H1 (cell line): ENCODE measurements at regions of chr15 and their contacts with region 1.

Region 1: DNA sequence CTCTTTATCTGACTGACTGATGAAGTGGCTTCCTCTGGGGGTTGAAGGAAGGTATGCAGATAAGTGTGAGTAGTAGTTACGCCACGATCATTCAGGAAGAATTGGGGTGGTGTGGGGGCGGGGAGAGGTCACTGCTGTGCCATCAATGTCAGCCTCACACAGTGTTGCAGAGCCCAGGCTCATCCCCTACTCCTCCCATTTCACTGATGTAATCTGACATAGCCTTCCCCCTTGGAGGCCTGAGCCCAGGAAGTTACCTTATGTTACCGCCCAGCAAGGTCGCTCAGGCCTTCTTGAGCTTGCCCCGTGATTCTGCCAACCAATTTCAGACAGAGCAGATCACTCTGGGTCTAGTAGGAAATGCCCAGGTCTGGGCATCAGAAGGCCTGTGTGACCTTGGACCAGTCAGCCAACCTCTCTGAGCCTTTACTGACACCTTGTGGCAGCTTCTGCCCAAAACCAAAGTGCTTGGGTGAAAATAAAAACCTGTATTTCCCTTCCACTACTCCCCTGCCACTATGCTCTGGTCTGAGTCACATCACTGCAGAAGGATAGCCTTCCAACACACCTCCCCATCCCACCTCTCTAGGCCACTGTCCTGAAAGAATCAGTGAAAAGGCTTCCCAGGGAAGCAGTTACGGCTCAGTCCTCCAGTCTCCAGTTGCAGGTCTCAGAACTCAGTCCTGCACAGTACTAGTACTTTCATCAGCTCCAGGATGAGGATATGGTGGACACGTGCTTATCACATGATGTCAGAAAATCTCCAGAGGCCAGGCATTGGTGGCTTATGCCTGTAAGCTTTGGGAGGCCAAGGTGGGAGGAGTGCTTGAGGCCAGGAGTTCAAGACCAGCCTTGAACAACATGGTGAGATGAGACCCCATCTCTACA is 28.1 kb upstream of the INSYN1 start:
- DNase-seq: peak in 1 of 2 experiments; percentile 66
- H3K4me3 ChIP-seq: no peak overlapping the region
- H3K27ac ChIP-seq: no peak overlapping the region
- H3K4me1 ChIP-seq: peaks cover 7 to 25% (median 14%) of the 10 kb centered on the region in 4 experiments
- H3K27me3 ChIP-seq: no peaks in the 10 kb centered on the region
- CTCF ChIP-seq: peak; percentile 37 to 73 (median 70)
- EP300 ChIP-seq: no peak
- POLR2A ChIP-seq: no peak
- RAD21 ChIP-seq: peak; percentile 77 to 79

Region 2: GRCh38 chr15:73704869-73705645 is 76.2 kb before region 1 on chr15:
- CTCF ChIA-PET with region 1: interaction called, 21 read pairs
- POLR2A ChIA-PET with region 1: no interaction called
- DNase-seq: peak; percentile 34 to 87
- H3K4me3 ChIP-seq: no peak overlapping the region
- H3K27ac ChIP-seq: no peak overlapping the region; the same call in 1 of the 2 replicates
- H3K4me1 ChIP-seq: no peaks in the 10 kb centered on the region
- H3K27me3 ChIP-seq: no peaks in the 10 kb centered on the region
- CTCF ChIP-seq: peak; percentile 90 to 95 (median 95)
- EP300 ChIP-seq: no peak
- POLR2A ChIP-seq: no peak
- RAD21 ChIP-seq: peak; percentile 78 to 83

Region 3: GRCh38 chr15:73712088-73712487 is 69.2 kb before region 1 on chr15:
- CTCF ChIA-PET with region 1: interaction called, 30 read pairs
- POLR2A ChIA-PET with region 1: interaction called, 3 read pairs
- DNase-seq: no peak
- H3K4me3 ChIP-seq: no peak overlapping the region
- H3K27ac ChIP-seq: no peak overlapping the region
- H3K4me1 ChIP-seq: no peaks in the 10 kb centered on the region
- H3K27me3 ChIP-seq: no peaks in the 10 kb centered on the region
- CTCF ChIP-seq: peak; percentile 61 to 76 (median 70)
- EP300 ChIP-seq: no peak
- POLR2A ChIP-seq: no peak
- RAD21 ChIP-seq: peak; percentile 65 to 77

Region 4: GRCh38 chr15:73717802-73718201 is 63.5 kb before region 1 on chr15:
- CTCF ChIA-PET with region 1: interaction called, 30 read pairs
- POLR2A ChIA-PET with region 1: interaction called, 3 read pairs
- DNase-seq: no peak
- H3K4me3 ChIP-seq: no peak overlapping the region
- H3K27ac ChIP-seq: no peak overlapping the region
- H3K4me1 ChIP-seq: peaks cover 0 to 4% (median 0%) of the 10 kb centered on the region in 4 experiments; a peak in 1 of 7 replicates
- H3K27me3 ChIP-seq: no peaks in the 10 kb centered on the region
- CTCF ChIP-seq: peak; percentile 50 to 57 (median 53)
- EP300 ChIP-seq: no peak
- POLR2A ChIP-seq: no peak
- RAD21 ChIP-seq: peak; percentile 28 to 56; a peak in 3 of 4 replicates

Region 5: DNA sequence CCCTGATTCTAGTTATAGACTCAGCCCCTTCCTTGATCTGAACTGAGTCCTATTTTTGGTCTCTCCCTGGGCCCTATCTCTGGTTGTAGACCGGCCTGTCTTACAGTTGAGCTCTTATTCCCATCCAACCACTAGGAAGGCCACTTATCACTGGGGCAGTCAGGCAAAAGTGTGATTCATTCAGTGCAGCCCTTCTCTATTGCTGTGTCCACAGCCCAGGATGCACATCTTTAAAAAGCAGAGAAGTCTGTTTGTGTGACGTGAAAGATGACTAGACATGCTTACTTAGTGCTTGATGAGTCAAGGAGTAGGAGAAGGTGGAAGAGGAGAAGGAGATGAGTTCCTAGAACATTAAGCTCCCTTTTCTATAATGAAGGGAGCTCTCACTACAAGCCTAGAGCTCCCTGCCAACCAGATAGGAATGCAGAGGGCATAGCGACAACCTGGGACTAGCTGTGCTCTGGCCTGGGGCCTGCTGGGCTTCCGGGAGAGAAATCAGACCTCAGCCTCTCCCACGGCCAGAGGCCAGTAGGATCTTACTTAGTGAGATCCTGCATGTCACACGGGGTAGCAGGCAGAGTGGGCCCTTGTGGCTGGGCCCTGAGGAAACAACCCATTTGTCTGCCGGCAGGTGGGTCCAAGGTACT is 53.8 kb before region 1 on chr15:
- CTCF ChIA-PET with region 1: interaction called, 10 read pairs
- POLR2A ChIA-PET with region 1: no interaction called
- DNase-seq: no peak
- H3K4me3 ChIP-seq: no peak overlapping the region
- H3K27ac ChIP-seq: no peak overlapping the region
- H3K4me1 ChIP-seq: no peaks in the 10 kb centered on the region; a peak in 1 of 7 replicates
- H3K27me3 ChIP-seq: no peaks in the 10 kb centered on the region
- CTCF ChIP-seq: no peak
- EP300 ChIP-seq: no peak
- POLR2A ChIP-seq: no peak
- RAD21 ChIP-seq: no peak

Region 6: GRCh38 chr15:73753250-73754130 is 27.8 kb before region 1 on chr15 and contains the start of gene INSYN1:
- CTCF ChIA-PET with region 1: interaction called, 45 read pairs
- POLR2A ChIA-PET with region 1: interaction called, 6 read pairs
- DNase-seq: peak; percentile 21 to 67
- H3K4me3 ChIP-seq: peak within 1 kb of the TSS; percentile 43 to 87 (median 60)
- H3K27ac ChIP-seq: no peak within 1 kb of the TSS
- H3K4me1 ChIP-seq: peaks cover 11 to 23% (median 17%) of the 10 kb centered on the region in 4 experiments
- H3K27me3 ChIP-seq: peaks cover 0 to 24% (median 13%) of the 10 kb centered on the region in 4 experiments; a peak in 6 of 7 replicates
- CTCF ChIP-seq: no peak
- EP300 ChIP-seq: no peak
- POLR2A ChIP-seq: no peak
- RAD21 ChIP-seq: no peak; a peak in 1 of 4 replicates
- total RNA-seq, gene INSYN1: 10.2 and 13.1 TPM in 2 replicates

Region 7: GRCh38 chr15:73792415-73792814 is 11.1 kb after region 1 on chr15:
- CTCF ChIA-PET with region 1: interaction called, 13 read pairs
- POLR2A ChIA-PET with region 1: no interaction called
- DNase-seq: no peak
- H3K4me3 ChIP-seq: no peak overlapping the region
- H3K27ac ChIP-seq: no peak overlapping the region
- H3K4me1 ChIP-seq: peaks cover 6 to 10% (median 7%) of the 10 kb centered on the region in 4 experiments
- H3K27me3 ChIP-seq: peaks cover 0 to 2% (median 0%) of the 10 kb centered on the region in 4 experiments; a peak in 2 of 7 replicates
- CTCF ChIP-seq: no peak
- EP300 ChIP-seq: no peak
- POLR2A ChIP-seq: no peak
- RAD21 ChIP-seq: no peak

Region 8: DNA sequence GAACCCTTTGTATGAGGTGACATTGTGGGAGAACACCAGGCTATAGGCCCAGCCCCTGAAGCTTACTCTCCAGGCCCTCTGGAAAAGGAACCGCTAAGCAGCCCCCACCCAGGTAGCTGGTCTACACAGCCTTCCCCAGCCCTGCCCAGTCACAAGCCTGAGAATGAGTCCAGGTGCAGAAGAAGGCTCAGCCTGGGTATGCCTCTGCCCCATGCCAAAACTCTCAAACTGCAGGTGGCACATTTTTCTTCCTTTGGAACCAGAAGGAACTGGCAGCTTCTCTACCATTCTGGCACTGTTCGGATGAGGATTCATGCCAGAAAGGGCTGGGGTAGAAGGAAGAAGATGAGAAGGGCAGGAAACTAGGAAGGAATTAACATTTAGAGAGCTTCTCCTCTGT is 68.4 kb after region 1 on chr15:
- CTCF ChIA-PET with region 1: no interaction called
- POLR2A ChIA-PET with region 1: no interaction called
- DNase-seq: no peak
- H3K4me3 ChIP-seq: no peak overlapping the region
- H3K27ac ChIP-seq: no peak overlapping the region
- H3K4me1 ChIP-seq: no peaks in the 10 kb centered on the region
- H3K27me3 ChIP-seq: no peaks in the 10 kb centered on the region
- CTCF ChIP-seq: no peak
- EP300 ChIP-seq: no peak
- POLR2A ChIP-seq: no peak
- RAD21 ChIP-seq: no peak

Region 9: GRCh38 chr15:74240002-74240568 is 458.8 kb after region 1 on chr15:
- CTCF ChIA-PET with region 1: no interaction called
- POLR2A ChIA-PET with region 1: no interaction called
- DNase-seq: no peak
- H3K4me3 ChIP-seq: no peak overlapping the region
- H3K27ac ChIP-seq: no peak overlapping the region
- H3K4me1 ChIP-seq: peaks cover 0 to 26% (median 16%) of the 10 kb centered on the region in 4 experiments; a peak in 6 of 7 replicates
- H3K27me3 ChIP-seq: peaks cover 0 to 9% (median 2%) of the 10 kb centered on the region in 4 experiments; a peak in 4 of 7 replicates
- CTCF ChIP-seq: peak; percentile 28 to 47 (median 40)
- EP300 ChIP-seq: no peak
- POLR2A ChIP-seq: no peak
- RAD21 ChIP-seq: peak; percentile 31 to 51; a peak in 3 of 4 replicates